Gastrocnemius medialis (tissue), 4 donors: ENCODE measurements at regions of chr18 and their contacts with region 1.

Region 1: GRCh38 chr18:79988451-79989194 is at the start of gene TXNL4A:
- DNase-seq: peak; percentile 70 to 84
- ATAC-seq: peak; percentile 96 to 98
- H3K4me3 ChIP-seq: peak within 1 kb of the TSS; percentile 84 to 99 (median 89)
- H3K27ac ChIP-seq: peak within 1 kb of the TSS; percentile 94 to 100 (median 96)
- H3K4me1 ChIP-seq: peaks cover 15 to 23% of the 10 kb centered on the region in 2 donors
- H3K27me3 ChIP-seq: no peaks in the 10 kb centered on the region
- CTCF ChIP-seq: no peak
- POLR2A ChIP-seq: peak; percentile 81 to 93
- total RNA-seq, gene TXNL4A: 39.9 to 105 (median 66.4) TPM

Region 2: GRCh38 chr18:78875268-78875997 is 1113.2 kb before region 1 on chr18:
- in situ Hi-C with region 1: no loop called
- intact Hi-C with region 1: no loop called
- DNase-seq: no peak
- ATAC-seq: no peak
- H3K4me3 ChIP-seq: no peak overlapping the region
- H3K27ac ChIP-seq: no peak overlapping the region
- H3K4me1 ChIP-seq: no peaks in the 10 kb centered on the region
- H3K27me3 ChIP-seq: no peaks in the 10 kb centered on the region
- CTCF ChIP-seq: peak in 1 of 5 experiments; percentile 37
- POLR2A ChIP-seq: no peak

Region 3: DNA sequence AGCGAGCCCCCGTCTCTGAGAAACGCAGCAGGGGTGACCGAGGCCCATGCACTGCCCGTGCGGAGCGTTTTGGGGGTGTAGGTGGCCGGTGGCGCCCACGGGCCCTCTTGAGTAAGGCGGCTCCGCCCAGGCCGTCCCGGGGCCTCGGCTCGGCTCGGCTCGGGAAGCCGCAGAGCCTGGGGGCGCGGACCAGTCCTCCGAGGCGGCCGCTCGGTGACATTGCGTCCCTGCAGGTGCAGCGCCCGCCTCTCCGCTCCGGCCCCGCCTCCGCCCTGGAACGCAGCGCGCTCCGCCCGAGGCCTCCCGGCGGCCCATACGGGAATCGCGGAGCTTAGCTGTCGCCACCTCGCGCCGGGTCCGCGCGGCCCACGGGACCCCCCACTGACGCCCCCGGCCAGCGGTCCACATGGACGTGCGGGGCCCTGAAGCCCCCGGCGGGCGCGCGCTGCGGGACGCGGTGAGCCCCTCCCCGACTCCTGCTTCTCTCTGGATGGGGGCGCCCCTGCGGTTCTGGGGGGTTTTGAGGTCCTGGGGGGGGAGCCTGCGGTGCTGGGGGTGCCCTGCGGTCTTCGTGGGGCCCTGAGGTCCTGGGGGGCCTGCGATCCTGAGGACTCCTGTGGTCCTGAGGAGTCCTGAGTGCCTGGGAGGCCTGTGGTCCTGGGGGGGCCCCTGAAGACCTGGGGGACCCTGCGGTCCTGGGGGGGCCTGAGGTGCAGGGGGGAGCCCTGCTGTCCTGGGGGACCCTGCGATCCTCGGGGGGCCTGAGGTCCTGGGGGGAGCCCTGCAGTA is 24.1 kb before region 1 on chr18 and contains the start of gene HSBP1L1:
- in situ Hi-C with region 1: no loop called
- intact Hi-C with region 1: loop called (anchors 2 kb)
- DNase-seq: peak in 1 of 2 donors; percentile 48
- ATAC-seq: peak; percentile 65 to 77
- H3K4me3 ChIP-seq: peak within 1 kb of the TSS; percentile 51 to 88 (median 57)
- H3K27ac ChIP-seq: peak within 1 kb of the TSS; percentile 65 to 81 (median 72)
- H3K4me1 ChIP-seq: peaks cover 3 to 4% of the 10 kb centered on the region in 2 donors
- H3K27me3 ChIP-seq: peaks cover 0 to 3% (median 0%) of the 10 kb centered on the region in 3 donors
- CTCF ChIP-seq: peak in 3 of 5 experiments; percentile 34 to 61 (median 49)
- POLR2A ChIP-seq: no peak
- total RNA-seq, gene HSBP1L1: 0.94 to 13.4 (median 6.9) TPM

Region 4: GRCh38 chr18:80077873-80078272 is 89.2 kb after region 1 on chr18:
- in situ Hi-C with region 1: no loop called
- intact Hi-C with region 1: no loop called
- DNase-seq: no peak
- ATAC-seq: no peak
- H3K4me3 ChIP-seq: no peak overlapping the region
- H3K27ac ChIP-seq: no peak overlapping the region
- H3K4me1 ChIP-seq: no peaks in the 10 kb centered on the region
- H3K27me3 ChIP-seq: no peaks in the 10 kb centered on the region
- CTCF ChIP-seq: no peak
- POLR2A ChIP-seq: no peak